Motor neuron (in vitro differentiated cells): ENCODE measurements at regions of chr3 and their contacts with region 1.

Region 1: GRCh38 chr3:16177962-16178627 is 3.6 kb downstream of the GALNT15 start:
- ATAC-seq: peak; percentile 64 to 96 (median 90)
- H3K4me3 ChIP-seq: no peak overlapping the region
- H3K27ac ChIP-seq: no peak overlapping the region
- H3K4me1 ChIP-seq: no peaks in the 10 kb centered on the region

Region 2: GRCh38 chr3:15845475-15845874 is 332.6 kb before region 1 on chr3:
- in situ Hi-C with region 1: loop called in 1 of 9 experiments (anchors 25 kb)
- ATAC-seq: no peak
- H3K4me3 ChIP-seq: no peak overlapping the region
- H3K27ac ChIP-seq: no peak overlapping the region
- H3K4me1 ChIP-seq: peaks cover 0 to 3% of the 10 kb centered on the region in 2 donors

Region 3: DNA sequence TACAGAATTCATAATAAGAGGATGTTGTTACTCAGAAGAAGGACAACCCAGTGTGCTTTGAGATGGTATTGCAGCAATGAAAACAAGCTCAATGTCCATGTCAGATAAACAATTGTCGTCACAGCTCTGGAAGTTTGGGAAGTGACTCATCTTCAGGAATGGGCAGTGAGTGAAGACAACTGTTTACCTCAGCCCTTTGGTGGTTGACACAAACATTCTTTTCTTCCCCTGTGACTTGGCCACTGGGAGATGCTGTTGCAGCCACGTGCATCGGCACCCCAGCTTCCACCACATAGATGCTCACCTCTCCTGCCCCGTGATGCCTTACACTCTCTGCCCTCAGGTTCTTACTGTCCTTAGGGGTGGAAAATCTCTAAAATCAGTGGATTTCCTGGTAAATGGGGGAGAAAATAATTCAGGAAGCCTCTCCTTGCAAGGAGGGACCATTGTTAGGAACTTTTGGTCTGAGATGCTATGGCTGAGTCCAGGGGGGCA is 117.7 kb before region 1 on chr3:
- in situ Hi-C with region 1: loop called in 2 of 9 experiments (anchors 10 to 25 kb)
- ATAC-seq: peak in 6 of 8 experiments; percentile 46 to 82 (median 76)
- H3K4me3 ChIP-seq: no peak overlapping the region
- H3K27ac ChIP-seq: no peak overlapping the region
- H3K4me1 ChIP-seq: peaks cover 0 to 5% of the 10 kb centered on the region in 2 donors

Region 4: DNA sequence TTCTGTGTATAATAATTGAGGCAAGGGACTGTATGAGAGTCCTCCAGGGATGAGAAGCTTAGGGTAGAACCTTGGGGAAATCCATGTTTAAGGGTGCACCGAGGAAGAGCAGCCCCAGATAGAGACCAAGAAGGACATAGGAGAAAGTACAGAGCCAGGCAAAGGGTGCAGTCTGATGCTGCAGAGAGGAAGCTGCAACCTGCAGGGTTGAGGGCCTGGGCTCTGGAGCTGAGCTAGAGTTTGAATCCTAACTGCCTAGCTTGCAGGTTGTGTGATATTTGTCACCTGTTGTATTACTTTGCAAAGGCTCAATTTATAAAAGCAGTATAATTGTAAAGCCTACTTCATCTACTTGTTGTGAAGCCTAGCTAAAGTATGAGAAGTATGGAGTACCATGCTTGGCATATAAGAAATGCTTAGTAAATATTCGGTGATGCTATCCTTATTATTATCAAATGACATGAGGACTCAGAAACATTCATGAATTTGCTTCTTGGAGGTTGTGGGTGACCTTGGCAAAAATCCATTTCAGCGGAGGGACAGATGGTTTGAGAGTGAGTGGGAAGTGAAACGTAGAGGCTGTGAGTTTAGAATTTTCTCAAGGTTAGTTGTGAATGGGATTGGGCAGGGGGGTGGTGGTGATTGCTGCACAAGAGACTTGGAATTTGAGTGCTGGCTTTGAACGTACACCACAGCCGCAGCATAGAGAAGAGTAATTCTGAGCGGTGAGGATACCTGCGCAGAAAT is 750.5 kb after region 1 on chr3:
- in situ Hi-C with region 1: no loop called
- ATAC-seq: no peak
- H3K4me3 ChIP-seq: no peak overlapping the region
- H3K27ac ChIP-seq: no peak overlapping the region
- H3K4me1 ChIP-seq: no peaks in the 10 kb centered on the region